Activated CD8-positive, alpha-beta T cell treated with anti-CD3 and anti-CD28 coated beads for 36 hours (primary cell): ENCODE measurements at regions of chr7 and their contacts with region 1.

Region 1: DNA sequence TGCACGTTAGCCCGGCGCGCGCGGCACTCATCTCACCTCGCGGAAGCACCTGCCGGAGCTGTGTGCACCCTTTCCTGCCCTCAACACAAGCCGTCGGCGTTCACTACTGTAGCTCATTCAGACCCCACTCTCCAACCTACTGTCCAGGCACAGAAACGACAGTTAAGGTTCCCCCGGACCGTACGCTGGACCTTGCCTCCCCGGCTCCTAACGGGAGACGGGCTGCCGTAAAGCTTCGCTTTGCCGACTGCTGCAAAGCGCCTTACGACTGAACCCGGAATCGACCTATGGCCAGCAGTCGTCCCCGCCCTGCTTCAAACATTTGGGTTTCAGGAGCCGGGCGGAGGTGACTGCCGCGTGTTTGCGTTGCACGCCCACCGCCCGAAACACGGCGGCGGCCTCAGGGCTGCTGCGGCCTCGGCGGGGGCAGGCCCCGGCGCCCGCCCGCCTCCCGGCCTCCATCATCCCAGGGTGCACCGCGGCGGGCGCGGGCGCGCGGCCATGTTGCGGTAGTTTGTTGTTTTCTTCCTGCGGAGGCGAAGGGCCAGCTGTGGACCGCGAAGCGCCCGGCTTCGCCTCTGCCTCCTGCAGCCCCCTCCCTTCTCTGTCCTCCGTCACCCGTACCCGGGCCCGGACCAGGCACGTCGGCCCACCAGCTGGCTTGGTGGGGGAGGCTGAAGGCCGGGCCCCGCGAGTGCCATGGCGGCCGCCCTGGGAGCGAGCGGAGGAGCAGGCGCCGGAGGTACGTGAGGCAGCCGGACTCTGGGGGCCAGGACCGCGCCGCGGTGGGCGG is at the start of gene RBM33:
- DNase-seq: peak; percentile 85
- ATAC-seq: peak; percentile 82
- H3K4me3 Mint-ChIP-seq: peak within 1 kb of the TSS; percentile 89
- H3K27ac Mint-ChIP-seq: peak within 1 kb of the TSS; percentile 98
- H3K4me1 Mint-ChIP-seq: peaks cover 39% of the 10 kb centered on the region
- H3K27me3 Mint-ChIP-seq: no peaks in the 10 kb centered on the region
- CTCF ChIP-seq: no peak
- total RNA-seq, gene RBM33: 73.7 to 84.8 TPM

Region 2: DNA sequence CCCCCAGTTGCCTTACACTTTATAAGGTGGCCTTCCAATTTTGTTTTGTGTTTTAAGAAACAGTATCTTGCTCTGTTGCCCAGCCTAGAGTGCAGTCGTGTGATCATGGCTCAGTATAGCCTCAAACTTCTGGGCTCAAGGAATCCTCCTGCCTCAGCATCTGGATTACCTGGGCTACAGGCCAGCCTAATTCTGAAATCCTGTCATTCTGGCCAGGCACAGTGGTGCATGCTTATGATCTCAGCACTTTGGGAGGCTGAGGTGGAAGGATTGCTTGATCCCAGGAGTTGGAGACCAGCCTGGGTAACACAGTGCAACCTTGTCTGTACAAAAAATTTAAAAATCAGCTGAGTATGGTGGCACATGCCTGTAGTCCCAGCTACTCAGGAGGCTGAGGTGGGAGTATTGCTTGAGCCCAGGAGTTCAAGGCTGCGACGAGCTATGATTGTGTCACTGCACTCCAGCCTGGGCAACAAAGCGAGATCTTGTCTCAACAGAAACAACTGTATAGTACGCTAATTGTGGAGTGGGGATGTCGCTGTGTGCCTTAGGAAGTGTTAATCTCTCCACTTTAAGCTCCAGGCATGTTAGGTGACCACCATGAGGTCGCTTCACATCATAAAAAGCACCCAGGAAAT is 24.6 kb before region 1 on chr7:
- CTCF ChIA-PET with region 1: no interaction called
- POLR2A ChIA-PET with region 1: no interaction called
- intact Hi-C with region 1: no loop called
- DNase-seq: no peak
- ATAC-seq: no peak
- H3K4me3 Mint-ChIP-seq: no peak overlapping the region
- H3K27ac Mint-ChIP-seq: no peak overlapping the region
- H3K4me1 Mint-ChIP-seq: no peaks in the 10 kb centered on the region
- H3K27me3 Mint-ChIP-seq: peaks cover 3% of the 10 kb centered on the region
- CTCF ChIP-seq: no peak

Region 3: GRCh38 chr7:155738652-155739537 is 94.5 kb after region 1 on chr7:
- CTCF ChIA-PET with region 1: no interaction called
- POLR2A ChIA-PET with region 1: no interaction called
- intact Hi-C with region 1: loop called (anchors 5 kb)
- DNase-seq: peak; percentile 89
- ATAC-seq: peak; percentile 66
- H3K4me3 Mint-ChIP-seq: peak overlapping the region; percentile 59
- H3K27ac Mint-ChIP-seq: peak overlapping the region; percentile 82
- H3K4me1 Mint-ChIP-seq: peaks cover 68% of the 10 kb centered on the region
- H3K27me3 Mint-ChIP-seq: no peaks in the 10 kb centered on the region
- CTCF ChIP-seq: peak; percentile 73

Region 4: DNA sequence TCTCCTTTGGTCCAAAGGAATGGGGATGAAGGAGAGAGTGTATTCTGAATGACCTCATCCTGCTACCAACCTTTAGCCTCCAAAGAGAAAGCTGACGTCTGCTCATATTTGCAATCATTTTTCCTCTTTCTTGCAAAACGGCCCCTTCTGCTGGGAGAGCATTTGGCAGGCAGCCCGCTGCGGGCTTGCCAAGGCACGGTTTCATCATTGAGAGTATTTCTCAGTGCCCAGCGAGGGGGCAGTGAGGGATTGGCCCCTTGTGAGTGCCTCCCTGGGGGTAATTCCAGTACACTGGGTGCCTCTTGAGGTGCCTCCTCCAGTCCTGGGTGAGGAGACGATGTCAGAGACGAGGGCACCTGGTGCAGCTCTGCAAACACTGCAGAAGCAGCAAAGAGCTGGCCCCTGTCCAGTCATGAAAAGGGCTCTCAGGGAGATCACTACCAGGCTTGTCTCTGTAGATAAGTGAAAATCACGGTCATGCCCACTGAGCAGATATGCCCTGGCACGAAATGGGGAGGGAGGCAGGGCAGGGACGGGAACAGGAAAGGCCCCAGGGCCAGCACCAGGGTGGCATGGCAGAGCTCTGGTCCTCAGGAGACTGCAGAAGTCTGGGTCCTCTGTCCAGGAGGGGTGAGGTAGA is 216.6 kb after region 1 on chr7:
- CTCF ChIA-PET with region 1: no interaction called
- POLR2A ChIA-PET with region 1: no interaction called
- intact Hi-C with region 1: no loop called
- DNase-seq: no peak
- ATAC-seq: no peak
- H3K4me3 Mint-ChIP-seq: no peak overlapping the region
- H3K27ac Mint-ChIP-seq: no peak overlapping the region
- H3K4me1 Mint-ChIP-seq: no peaks in the 10 kb centered on the region
- H3K27me3 Mint-ChIP-seq: peaks cover 3% of the 10 kb centered on the region
- CTCF ChIP-seq: no peak

Region 5: DNA sequence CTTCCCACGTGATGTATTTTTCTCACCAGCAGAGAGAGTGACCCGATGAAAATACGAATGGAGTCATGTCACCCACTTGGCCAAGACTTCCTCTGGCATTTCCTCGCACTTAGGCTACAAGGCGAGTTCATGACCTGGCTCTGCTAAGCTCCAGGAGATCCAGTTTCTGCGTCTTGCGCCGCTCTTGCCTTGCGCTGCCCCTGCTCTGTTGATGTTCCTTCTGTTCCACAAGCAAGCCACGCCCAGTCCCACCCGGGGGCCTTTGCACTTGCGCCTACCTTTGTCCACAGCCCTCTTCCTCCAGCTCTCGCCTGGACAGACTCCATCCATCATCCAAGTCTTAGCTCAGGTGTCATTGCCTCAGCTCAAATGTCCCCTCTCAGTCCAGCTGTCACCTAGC is 284.2 kb after region 1 on chr7:
- CTCF ChIA-PET with region 1: no interaction called
- POLR2A ChIA-PET with region 1: no interaction called
- intact Hi-C with region 1: no loop called
- DNase-seq: no peak
- ATAC-seq: no peak
- H3K4me3 Mint-ChIP-seq: no peak overlapping the region
- H3K27ac Mint-ChIP-seq: no peak overlapping the region
- H3K4me1 Mint-ChIP-seq: no peaks in the 10 kb centered on the region
- H3K27me3 Mint-ChIP-seq: peaks cover 8% of the 10 kb centered on the region
- CTCF ChIP-seq: no peak

Region 6: DNA sequence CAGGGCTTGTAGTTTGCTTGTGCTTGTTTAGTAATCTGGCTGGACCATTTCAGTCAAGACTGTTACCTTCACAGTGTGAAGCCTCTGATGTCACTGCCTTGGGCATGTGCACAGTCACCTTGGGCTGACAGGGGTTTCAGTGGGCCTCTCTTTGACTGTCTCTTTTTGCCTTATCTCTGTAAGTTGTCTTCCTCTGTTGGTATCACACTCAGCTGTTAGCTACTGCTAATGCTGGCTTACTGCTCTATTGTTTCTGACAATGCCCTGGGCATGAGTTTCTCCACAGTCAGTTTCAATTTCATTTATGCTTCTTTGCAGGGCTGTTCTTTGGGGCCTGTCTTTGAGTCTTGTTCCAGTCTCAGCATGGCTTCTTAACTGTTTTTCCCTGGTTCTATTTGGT is 369.8 kb after region 1 on chr7:
- CTCF ChIA-PET with region 1: no interaction called
- POLR2A ChIA-PET with region 1: no interaction called
- intact Hi-C with region 1: no loop called
- DNase-seq: peak; percentile 31
- ATAC-seq: peak; percentile 85
- H3K4me3 Mint-ChIP-seq: no peak overlapping the region
- H3K27ac Mint-ChIP-seq: no peak overlapping the region
- H3K4me1 Mint-ChIP-seq: peaks cover 5% of the 10 kb centered on the region
- H3K27me3 Mint-ChIP-seq: peaks cover 2% of the 10 kb centered on the region
- CTCF ChIP-seq: no peak